PC-3 (cell line): ENCODE measurements at regions of chr17 and their contacts with region 1.

Region 1: DNA sequence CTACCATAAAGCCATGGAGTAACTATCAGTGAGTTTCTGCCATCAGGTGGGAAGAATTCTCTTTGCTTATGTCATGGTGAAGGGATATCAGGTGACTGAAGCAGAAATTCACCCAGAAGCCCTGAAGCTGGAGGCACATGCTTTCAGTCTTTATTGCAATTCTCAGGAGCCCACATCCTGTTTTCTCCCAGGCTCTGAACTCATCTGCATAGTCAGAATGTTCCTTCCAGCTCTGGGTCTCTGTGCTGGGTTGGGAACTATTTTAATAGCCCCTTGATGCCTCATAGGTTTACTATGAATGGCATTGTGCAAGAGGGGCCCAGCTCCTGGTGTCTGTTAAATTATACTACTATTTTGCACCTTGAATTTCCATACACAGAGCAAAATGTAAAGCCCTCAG is 198.4 kb upstream of the SOX9 start:
- DNase-seq: peak; percentile 98
- ATAC-seq: peak; percentile 78
- H3K4me3 ChIP-seq: no peak overlapping the region
- H3K27ac ChIP-seq: peak overlapping the region; percentile 81
- H3K4me1 ChIP-seq: peaks cover 50% of the 10 kb centered on the region
- H3K27me3 ChIP-seq: no peaks in the 10 kb centered on the region
- CTCF ChIP-seq: no peak

Region 2: GRCh38 chr17:71821511-71821910 is 100.9 kb before region 1 on chr17:
- CTCF ChIA-PET with region 1: no interaction called
- POLR2A ChIA-PET with region 1: no interaction called
- intact Hi-C with region 1: loop called (anchors 5 kb)
- DNase-seq: peak; percentile 91
- ATAC-seq: peak; percentile 94
- H3K4me3 ChIP-seq: no peak overlapping the region
- H3K27ac ChIP-seq: peak overlapping the region; percentile 55
- H3K4me1 ChIP-seq: peaks cover 18% of the 10 kb centered on the region
- H3K27me3 ChIP-seq: no peaks in the 10 kb centered on the region
- CTCF ChIP-seq: no peak

Region 3: DNA sequence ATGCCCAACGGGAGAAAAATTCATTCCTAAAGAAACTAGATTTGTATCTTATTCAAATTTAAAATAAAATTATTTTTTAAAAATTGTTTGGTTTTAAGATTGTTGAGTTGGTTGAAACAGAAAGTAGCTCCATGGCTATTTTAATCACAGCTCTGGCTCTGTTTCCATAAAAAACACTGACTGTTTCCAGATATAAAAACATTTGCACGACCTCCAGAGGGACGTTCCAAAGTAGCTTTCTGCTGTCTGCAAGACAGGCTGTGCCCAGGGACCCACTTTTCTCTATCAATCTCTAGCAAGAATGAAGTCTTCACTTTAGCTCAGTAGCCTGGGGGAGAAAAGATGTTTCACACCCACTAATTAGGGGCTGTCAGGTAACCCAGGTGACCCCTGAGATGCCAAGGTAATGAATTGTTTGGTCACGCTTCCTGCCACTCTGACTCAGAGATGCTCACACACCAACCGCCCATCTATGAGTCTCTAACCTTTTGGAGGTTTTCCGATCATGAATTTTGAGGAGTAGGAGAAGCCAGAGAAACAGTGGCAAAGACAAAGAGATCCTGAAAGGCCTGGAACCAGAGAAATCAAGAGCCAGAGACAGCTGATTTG is 21.7 kb before region 1 on chr17:
- CTCF ChIA-PET with region 1: no interaction called
- POLR2A ChIA-PET with region 1: no interaction called
- intact Hi-C with region 1: loop called (anchors 2 kb)
- DNase-seq: peak; percentile 98
- ATAC-seq: peak; percentile 82
- H3K4me3 ChIP-seq: peak overlapping the region; percentile 20; the same call in 1 of the 2 replicates
- H3K27ac ChIP-seq: peak overlapping the region; percentile 80
- H3K4me1 ChIP-seq: peaks cover 54% of the 10 kb centered on the region
- H3K27me3 ChIP-seq: no peaks in the 10 kb centered on the region
- CTCF ChIP-seq: no peak

Region 4: DNA sequence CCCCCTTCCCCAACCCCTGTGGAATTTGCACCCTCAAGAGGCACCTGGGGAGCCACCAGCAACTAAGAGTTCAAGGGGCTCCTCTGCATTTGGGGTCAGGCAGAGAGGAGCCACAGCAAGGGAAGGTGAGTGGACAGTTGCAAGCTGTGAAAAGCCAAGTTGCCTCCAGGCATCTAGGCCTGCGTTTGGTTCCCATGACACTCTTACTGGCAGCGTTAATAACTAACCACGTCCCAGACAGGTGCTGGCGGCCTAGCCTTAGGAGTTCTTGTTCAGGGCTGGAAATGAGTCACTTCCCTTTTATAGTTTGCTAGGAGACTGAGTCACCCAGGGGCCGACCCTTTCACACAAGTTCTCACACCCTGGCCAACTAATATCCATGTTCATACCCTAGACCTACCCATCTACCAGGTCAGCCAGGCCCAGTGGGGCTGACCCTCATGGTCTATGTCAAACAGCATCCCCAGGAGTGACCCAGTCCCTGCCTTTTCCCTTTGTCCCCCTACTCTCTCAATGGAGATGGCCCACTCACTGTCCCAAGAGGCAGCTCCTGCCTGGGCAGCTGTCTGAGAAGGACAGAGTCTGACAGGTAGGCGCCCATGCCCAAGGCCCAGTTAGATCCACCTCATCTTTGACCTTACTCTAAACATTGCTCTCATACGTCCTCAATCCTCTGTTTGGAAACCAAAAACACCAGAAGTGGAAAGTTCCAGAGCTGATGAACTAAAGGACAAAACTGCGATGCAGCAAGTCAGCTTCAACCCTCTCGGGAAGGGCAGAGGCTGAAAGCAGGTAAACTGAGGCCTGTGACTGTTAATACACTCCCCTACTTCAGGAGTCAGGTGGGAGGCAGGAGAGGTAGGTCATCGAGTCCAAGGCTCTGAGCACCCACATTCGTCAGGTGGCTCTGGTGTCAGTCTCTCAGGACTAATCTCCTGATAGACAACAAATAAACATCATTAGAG is 499.0 kb after region 1 on chr17:
- CTCF ChIA-PET with region 1: no interaction called
- POLR2A ChIA-PET with region 1: no interaction called
- intact Hi-C with region 1: no loop called
- DNase-seq: peak; percentile 100
- ATAC-seq: peak; percentile 80
- H3K4me3 ChIP-seq: no peak overlapping the region
- H3K27ac ChIP-seq: peak overlapping the region; percentile 94
- H3K4me1 ChIP-seq: peaks cover 41% of the 10 kb centered on the region
- H3K27me3 ChIP-seq: no peaks in the 10 kb centered on the region
- CTCF ChIP-seq: no peak